ENCODE measurements at regions of chr19 and their contacts with region 1.

Region 1: DNA sequence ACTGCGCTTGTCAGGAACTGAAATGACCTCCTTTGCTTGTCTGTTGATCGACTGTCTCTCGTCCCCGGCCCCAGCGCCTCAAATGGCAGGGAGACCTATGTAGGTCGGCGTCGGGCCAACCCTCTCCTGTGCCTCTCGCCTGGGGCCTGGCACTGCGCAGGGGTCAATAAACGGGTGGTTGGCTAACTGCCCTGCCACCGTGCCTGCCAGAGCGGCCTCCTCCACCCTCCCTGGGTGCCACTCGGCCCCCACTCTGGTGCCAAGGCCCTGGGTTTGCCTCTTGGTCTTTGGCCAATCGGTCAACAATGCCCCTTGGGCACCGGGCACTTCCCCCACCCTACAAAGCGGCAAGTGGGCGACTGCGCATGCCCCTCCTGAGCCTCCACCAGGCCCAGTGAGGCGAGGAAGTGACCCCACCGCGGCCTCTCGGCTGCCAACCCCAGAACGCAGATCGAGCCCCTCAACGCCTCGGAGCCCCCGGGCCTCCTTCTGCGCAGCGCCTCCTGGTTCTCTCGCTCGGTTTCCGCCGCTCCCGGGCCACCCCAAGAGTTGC is 1.1 kb downstream of the KEAP1 start:
- DNase-seq: no peak
- H3K4me3 ChIP-seq: peak overlapping the region; percentile 86
- CTCF ChIP-seq: no peak

Region 2: DNA sequence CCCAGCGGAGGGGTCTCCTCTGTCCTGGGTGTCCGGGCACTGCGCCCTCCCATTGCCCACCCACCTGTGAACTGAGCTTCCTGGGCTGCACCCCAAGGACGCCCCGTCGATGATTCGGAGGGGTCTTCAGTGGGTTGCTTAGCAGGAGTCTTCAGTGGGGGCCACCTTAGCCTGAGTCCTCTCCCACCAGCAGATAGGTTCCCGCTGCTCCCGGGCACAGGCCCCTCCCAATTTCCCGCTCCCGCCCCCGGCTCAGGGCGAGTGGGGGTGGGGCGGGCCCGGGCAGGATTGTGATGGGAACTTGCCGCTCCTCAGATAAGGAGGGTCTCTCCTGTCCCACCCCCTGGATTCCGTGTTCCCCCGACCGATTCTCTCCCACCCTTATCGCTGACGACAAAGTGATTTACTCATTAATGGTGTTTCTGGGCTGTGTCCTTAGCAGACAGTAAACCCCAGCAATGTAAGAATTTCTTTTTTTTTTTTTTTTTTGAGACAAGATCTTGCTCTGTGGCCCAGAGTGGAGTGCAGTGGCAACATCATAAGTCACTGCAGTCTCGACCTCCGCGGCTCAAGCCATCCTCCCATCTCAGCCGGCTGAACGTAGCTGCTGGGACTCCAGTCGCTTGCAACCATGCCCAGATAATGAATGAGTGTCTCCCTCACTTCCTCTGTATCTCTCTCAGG is 15.9 kb after region 1 on chr19:
- CTCF ChIA-PET with region 1: interaction called, 14 read pairs
- POLR2A ChIA-PET with region 1: no interaction called
- DNase-seq: no peak
- H3K4me3 ChIP-seq: peak overlapping the region; percentile 55
- CTCF ChIP-seq: no peak

Region 3: GRCh38 chr19:10523135-10523636 is 21.1 kb after region 1 on chr19:
- CTCF ChIA-PET with region 1: interaction called, 14 read pairs
- POLR2A ChIA-PET with region 1: no interaction called
- DNase-seq: no peak
- H3K4me3 ChIP-seq: no peak overlapping the region
- CTCF ChIP-seq: no peak

Region 4: GRCh38 chr19:10654493-10655304 is 152.7 kb after region 1 on chr19:
- CTCF ChIA-PET with region 1: no interaction called
- POLR2A ChIA-PET with region 1: no interaction called
- DNase-seq: no peak
- H3K4me3 ChIP-seq: peak overlapping the region; percentile 88
- CTCF ChIP-seq: no peak